Psoas muscle (tissue), 8 donors: ENCODE measurements at regions of chr1 and their contacts with region 1.

Region 1: GRCh38 chr1:206658264-206658980 is 23.1 kb downstream of the DYRK3 start:
- DNase-seq: peak; percentile 58 to 82
- ATAC-seq: peak; percentile 85 to 92 (median 88)
- H3K4me3 ChIP-seq: peak overlapping the region; percentile 51
- H3K27ac ChIP-seq: peak overlapping the region; percentile 87
- H3K4me1 ChIP-seq: peaks cover 36% of the 10 kb centered on the region
- H3K27me3 ChIP-seq: no peaks in the 10 kb centered on the region
- CTCF ChIP-seq: peak; percentile 90

Region 2: DNA sequence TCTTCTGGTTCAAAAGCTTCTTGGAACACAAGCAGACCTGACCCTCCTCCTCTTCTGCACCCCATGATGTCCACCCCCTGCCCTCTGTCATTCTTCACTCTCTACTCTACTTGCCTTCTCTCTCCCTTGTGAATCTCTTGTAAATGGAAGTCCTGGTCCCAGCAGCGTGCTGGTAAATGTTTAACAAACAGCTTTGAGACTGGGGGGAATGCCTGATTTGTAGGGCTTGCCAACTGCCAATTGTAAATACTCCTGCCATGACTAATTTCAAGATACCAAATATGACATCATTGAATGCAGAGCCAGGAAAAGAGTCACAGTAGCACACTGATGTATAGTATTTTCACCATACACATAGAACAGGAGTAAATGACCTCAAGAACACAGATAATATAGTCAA is 1931.9 kb before region 1 on chr1:
- intact Hi-C with region 1: loop called in 1 of 2 experiments (anchors 10 kb)
- DNase-seq: no peak
- ATAC-seq: no peak
- H3K4me3 ChIP-seq: no peak overlapping the region
- H3K27ac ChIP-seq: no peak overlapping the region
- H3K4me1 ChIP-seq: no peaks in the 10 kb centered on the region
- H3K27me3 ChIP-seq: peaks cover 0 to 5% (median 0%) of the 10 kb centered on the region in 3 donors
- CTCF ChIP-seq: no peak